CD4-positive, alpha-beta memory T cell (primary cell): ENCODE measurements at regions of chr14 and their contacts with region 1.

Region 1: DNA sequence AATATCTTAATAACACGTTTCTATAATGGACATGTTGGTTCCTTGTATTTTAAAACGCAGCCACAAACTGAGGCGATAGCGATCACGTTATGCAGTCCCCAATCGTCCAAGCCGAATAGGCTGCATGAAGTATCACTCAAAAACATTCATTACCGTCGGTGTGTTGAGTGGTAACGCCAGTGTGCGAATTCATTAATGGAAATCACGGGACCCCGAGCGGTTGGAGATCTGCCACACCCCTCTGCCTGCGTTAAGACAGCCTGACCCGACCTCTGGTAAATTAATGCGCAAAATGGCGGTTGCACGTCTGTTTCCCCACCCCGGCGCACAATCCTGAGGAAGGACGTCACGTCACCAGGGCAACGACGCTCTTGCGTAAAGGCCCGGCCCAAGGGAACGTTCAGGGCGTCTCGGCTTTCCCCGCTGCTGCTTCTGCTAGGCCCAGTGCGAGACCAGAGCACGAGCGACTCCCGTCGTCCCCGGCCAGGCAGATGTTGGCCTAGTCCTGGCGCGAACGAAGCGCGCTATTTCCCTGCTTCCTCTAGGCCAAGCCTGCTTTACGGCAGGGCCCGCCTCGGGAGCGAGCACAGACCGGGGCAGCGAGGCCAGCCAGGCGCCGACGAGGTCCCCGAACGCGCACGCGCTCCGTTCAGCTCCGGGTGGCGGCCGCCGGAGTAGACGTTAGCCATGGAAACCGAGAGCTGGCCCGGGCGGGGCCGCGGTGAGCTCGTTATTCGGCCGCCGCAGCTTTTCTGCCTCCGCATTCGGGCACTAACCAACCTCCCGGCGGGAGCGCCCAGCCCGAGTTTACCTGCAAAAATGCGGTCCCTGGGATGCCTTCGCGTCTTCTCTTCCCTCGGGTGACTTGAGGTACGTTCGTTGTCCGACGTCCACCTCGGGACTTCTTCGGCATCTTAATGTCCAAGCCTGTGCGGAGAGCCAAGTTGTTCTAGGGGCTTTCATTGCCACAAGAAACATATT is at the start of gene PCNX4:
- DNase-seq: peak; percentile 93 to 97 (median 96)
- H3K4me3 ChIP-seq: peak within 1 kb of the TSS; percentile 71 to 97
- H3K4me3 Mint-ChIP-seq: peak within 1 kb of the TSS; percentile 90 to 98 (median 92)
- H3K27ac ChIP-seq: peak within 1 kb of the TSS; percentile 99
- H3K27ac Mint-ChIP-seq: peak within 1 kb of the TSS; percentile 95 to 100 (median 97)
- H3K4me1 ChIP-seq: peaks cover 34% of the 10 kb centered on the region
- H3K4me1 Mint-ChIP-seq: peaks cover 27 to 55% (median 38%) of the 10 kb centered on the region in 4 donors
- H3K27me3 ChIP-seq: no peaks in the 10 kb centered on the region
- H3K27me3 Mint-ChIP-seq: no peaks in the 10 kb centered on the region
- total RNA-seq, gene PCNX4: 41.5 to 53.0 TPM

Region 2: GRCh38 chr14:59483900-59484638 is 607.8 kb before region 1 on chr14 and contains the starts of genes JKAMP and L3HYPDH:
- CTCF ChIA-PET with region 1: no interaction called
- POLR2A ChIA-PET with region 1: interaction called, 4 read pairs
- intact Hi-C with region 1: loop called (anchors 1 kb)
- DNase-seq: peak; percentile 95 to 97 (median 95)
- H3K4me3 ChIP-seq: peak within 1 kb of the TSS; percentile 85 to 87
- H3K4me3 Mint-ChIP-seq: peak within 1 kb of the TSS; percentile 92 to 98 (median 96)
- H3K27ac ChIP-seq: peak within 1 kb of the TSS; percentile 82
- H3K27ac Mint-ChIP-seq: peak within 1 kb of the TSS; percentile 90 to 99 (median 96)
- H3K4me1 ChIP-seq: peaks cover 63% of the 10 kb centered on the region
- H3K4me1 Mint-ChIP-seq: peaks cover 52 to 72% (median 58%) of the 10 kb centered on the region in 4 donors
- H3K27me3 ChIP-seq: no peaks in the 10 kb centered on the region
- H3K27me3 Mint-ChIP-seq: no peaks in the 10 kb centered on the region
- total RNA-seq, gene JKAMP: 29.9 to 31.9 TPM
- total RNA-seq, gene L3HYPDH: 52.2 to 52.4 TPM

Region 3: GRCh38 chr14:59964251-59965007 is 127.4 kb before region 1 on chr14:
- CTCF ChIA-PET with region 1: interaction called, 6 read pairs
- POLR2A ChIA-PET with region 1: no interaction called
- intact Hi-C with region 1: loop called (anchors 1 kb)
- DNase-seq: peak in 1 of 5 donors; percentile 5
- H3K4me3 ChIP-seq: no peak overlapping the region
- H3K4me3 Mint-ChIP-seq: peak overlapping the region; percentile 77 to 98 (median 94)
- H3K27ac ChIP-seq: no peak overlapping the region
- H3K27ac Mint-ChIP-seq: peak overlapping the region in 5 of 7 donors; percentile 75 to 99 (median 99)
- H3K4me1 ChIP-seq: no peaks in the 10 kb centered on the region
- H3K4me1 Mint-ChIP-seq: peaks cover 0 to 13% (median 10%) of the 10 kb centered on the region in 4 donors
- H3K27me3 ChIP-seq: no peaks in the 10 kb centered on the region
- H3K27me3 Mint-ChIP-seq: peaks cover 2 to 3% of the 10 kb centered on the region in 2 donors

Region 4: DNA sequence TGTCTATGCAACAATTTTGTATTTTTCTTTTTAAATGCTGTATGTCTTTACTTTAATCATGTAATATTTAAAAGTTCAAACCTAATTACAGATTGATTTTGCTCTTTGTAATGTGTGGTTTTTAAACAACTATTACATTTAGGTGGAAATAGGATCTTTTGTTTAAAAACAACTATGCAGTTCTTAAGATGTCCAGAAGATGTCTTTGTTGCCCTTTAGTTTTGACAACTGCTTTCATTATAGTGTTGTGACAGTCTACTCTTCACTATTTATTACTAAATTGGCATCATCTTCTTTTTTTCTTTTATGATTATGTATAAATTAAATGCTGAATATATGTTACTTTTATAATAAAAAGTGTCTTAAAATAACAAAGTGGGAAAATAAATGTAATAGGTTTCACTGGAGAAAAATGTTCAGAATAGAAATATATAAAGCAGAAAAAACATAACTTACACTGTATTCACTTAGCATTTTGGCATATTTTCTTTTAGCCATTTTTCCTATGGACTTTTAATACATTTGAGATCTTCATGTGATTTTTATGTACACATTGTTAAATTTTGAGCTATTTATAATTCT is 27.3 kb before region 1 on chr14:
- CTCF ChIA-PET with region 1: interaction called, 5 read pairs
- POLR2A ChIA-PET with region 1: no interaction called
- intact Hi-C with region 1: loop called (anchors 2 kb)
- DNase-seq: peak in 4 of 5 donors; percentile 27 to 44 (median 39)
- H3K4me3 ChIP-seq: no peak overlapping the region
- H3K4me3 Mint-ChIP-seq: no peak overlapping the region
- H3K27ac ChIP-seq: no peak overlapping the region
- H3K27ac Mint-ChIP-seq: no peak overlapping the region
- H3K4me1 ChIP-seq: no peaks in the 10 kb centered on the region
- H3K4me1 Mint-ChIP-seq: no peaks in the 10 kb centered on the region
- H3K27me3 ChIP-seq: no peaks in the 10 kb centered on the region
- H3K27me3 Mint-ChIP-seq: peaks cover 0 to 14% of the 10 kb centered on the region in 2 donors

Region 5: DNA sequence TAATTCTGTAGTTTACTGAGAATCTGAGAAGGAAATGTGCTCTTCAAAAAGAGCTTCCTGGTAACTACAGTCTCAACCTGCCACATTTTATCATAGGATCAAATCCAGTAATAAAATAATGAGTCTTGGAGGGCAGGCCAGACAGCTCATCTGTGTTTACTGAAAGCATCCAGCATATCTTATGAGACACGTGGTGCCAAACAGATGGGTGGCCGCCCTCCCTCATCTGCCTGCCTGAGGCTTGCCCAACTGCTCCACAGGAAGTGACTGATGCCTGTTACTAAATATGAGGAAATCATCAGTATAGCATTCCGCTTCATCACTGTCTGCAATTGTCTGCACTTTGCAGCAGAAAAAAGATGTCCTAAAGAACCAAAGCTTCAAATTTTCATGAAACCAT is 59.9 kb after region 1 on chr14:
- CTCF ChIA-PET with region 1: interaction called, 3 read pairs
- POLR2A ChIA-PET with region 1: interaction called, 15 read pairs
- intact Hi-C with region 1: loop called (anchors 2 kb)
- DNase-seq: peak; percentile 63 to 85 (median 68)
- H3K4me3 ChIP-seq: no peak overlapping the region
- H3K4me3 Mint-ChIP-seq: peak overlapping the region in 7 of 8 donors; percentile 17 to 69 (median 36)
- H3K27ac ChIP-seq: peak overlapping the region; percentile 50
- H3K27ac Mint-ChIP-seq: peak overlapping the region; percentile 90 to 95 (median 94)
- H3K4me1 ChIP-seq: peaks cover 49% of the 10 kb centered on the region
- H3K4me1 Mint-ChIP-seq: peaks cover 35 to 54% (median 44%) of the 10 kb centered on the region in 4 donors
- H3K27me3 ChIP-seq: no peaks in the 10 kb centered on the region
- H3K27me3 Mint-ChIP-seq: no peaks in the 10 kb centered on the region

Region 6: DNA sequence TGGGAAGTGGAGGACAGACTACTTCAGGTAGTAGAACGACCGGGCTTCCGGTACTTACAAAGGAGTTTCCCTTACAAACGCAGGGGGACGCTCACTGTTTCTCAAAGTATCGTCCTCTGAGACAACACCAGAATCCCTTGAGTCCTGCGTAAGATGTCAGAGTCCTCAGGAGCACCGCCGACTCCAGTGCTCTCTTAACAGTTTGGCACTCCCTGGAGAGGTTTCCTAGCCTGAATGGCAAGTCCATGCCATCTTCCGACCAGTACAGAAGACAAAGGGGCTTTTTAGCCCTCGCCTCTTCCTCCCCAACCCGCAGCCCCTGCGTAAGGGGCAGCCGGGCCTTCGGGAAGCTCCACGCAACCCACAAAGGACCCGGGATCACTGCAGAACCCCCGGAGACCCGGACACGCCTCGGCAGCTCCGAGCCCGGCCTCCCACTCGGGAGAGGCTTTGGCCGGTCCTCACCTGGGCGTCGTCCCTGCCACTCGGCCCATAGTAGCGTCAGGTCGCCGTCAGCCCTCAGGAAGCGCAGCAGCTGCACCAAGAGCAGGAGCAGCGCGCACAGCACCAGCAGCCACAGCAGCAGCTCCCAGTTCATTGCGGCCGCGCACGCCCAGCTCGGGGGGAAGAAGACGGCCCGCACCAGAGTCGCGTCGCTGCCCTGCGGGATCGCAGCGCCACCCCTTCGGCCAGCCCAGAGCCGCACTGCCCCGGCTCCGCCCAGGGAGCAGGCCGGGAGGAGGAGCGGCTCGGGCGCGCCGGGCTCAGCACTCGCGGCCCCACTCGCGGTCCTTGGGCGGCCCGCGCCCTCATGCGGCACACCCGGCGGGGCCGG is 73.1 kb after region 1 on chr14 and contains the start of gene DHRS7:
- CTCF ChIA-PET with region 1: interaction called, 13 read pairs
- POLR2A ChIA-PET with region 1: interaction called, 78 read pairs
- intact Hi-C with region 1: loop called (anchors 1 kb)
- DNase-seq: peak; percentile 61 to 74 (median 65)
- H3K4me3 ChIP-seq: peak within 1 kb of the TSS; percentile 74 to 76
- H3K4me3 Mint-ChIP-seq: peak within 1 kb of the TSS; percentile 96 to 99 (median 99)
- H3K27ac ChIP-seq: peak within 1 kb of the TSS; percentile 82
- H3K27ac Mint-ChIP-seq: peak within 1 kb of the TSS; percentile 97 to 99 (median 99)
- H3K4me1 ChIP-seq: peaks cover 53% of the 10 kb centered on the region
- H3K4me1 Mint-ChIP-seq: peaks cover 36 to 56% (median 47%) of the 10 kb centered on the region in 4 donors
- H3K27me3 ChIP-seq: no peaks in the 10 kb centered on the region
- H3K27me3 Mint-ChIP-seq: no peaks in the 10 kb centered on the region
- total RNA-seq, gene DHRS7: 63.5 to 69.6 TPM

Region 7: DNA sequence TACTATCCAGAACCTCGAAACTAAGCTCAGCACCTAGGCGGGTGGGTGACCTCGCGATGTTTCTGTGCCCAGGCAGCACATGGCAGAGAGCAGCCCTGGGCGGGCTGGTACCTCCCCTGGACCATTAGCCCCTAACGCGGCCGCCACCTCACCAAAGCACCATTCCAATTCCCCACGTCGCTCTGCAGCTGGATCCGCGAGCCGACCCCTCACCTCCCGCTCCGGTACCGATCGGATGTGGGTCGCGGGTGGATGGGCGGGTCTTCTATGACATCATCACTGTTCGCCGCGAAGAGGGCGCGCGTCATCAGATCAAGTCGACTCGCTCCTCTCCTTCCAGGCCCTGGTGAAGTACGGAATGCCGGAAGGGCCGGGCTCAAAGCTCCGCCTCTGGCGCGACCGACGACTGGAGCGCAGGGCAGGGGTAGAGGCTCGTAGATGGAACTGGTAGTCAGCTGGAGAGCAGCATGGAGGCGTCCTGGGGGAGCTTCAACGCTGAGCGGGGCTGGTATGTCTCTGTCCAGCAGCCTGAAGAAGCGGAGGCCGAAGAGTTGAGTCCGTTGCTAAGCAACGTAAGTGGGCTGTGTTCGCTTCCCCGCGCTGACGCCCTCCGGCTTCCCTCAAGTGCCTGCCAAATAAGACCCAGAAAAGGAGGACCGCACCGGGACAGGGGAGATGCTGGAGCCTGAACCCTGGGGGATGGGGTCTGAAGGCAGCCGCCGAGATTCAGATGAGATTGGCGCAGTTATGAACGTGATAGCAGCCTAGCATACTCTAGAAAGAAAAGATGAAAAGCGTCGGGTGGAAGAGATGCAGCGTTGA is 889.2 kb after region 1 on chr14 and contains the starts of genes SLC38A6 and TRMT5:
- CTCF ChIA-PET with region 1: no interaction called
- POLR2A ChIA-PET with region 1: no interaction called
- intact Hi-C with region 1: loop called (anchors 2 kb)
- DNase-seq: peak; percentile 92 to 94 (median 93)
- H3K4me3 ChIP-seq: peak within 1 kb of the TSS; percentile 78 to 96
- H3K4me3 Mint-ChIP-seq: no peak within 1 kb of the TSS
- H3K27ac ChIP-seq: peak within 1 kb of the TSS; percentile 84
- H3K27ac Mint-ChIP-seq: no peak within 1 kb of the TSS
- H3K4me1 ChIP-seq: peaks cover 32% of the 10 kb centered on the region
- H3K4me1 Mint-ChIP-seq: peaks cover 16 to 22% (median 17%) of the 10 kb centered on the region in 4 donors
- H3K27me3 ChIP-seq: no peaks in the 10 kb centered on the region
- H3K27me3 Mint-ChIP-seq: no peaks in the 10 kb centered on the region
- total RNA-seq, gene SLC38A6: 19.9 to 21.3 TPM
- total RNA-seq, gene TRMT5: 8.5 to 11.8 TPM